Common myeloid progenitor, CD34-positive (primary cell): ENCODE measurements at regions of chr2 and their contacts with region 1.

Region 1: DNA sequence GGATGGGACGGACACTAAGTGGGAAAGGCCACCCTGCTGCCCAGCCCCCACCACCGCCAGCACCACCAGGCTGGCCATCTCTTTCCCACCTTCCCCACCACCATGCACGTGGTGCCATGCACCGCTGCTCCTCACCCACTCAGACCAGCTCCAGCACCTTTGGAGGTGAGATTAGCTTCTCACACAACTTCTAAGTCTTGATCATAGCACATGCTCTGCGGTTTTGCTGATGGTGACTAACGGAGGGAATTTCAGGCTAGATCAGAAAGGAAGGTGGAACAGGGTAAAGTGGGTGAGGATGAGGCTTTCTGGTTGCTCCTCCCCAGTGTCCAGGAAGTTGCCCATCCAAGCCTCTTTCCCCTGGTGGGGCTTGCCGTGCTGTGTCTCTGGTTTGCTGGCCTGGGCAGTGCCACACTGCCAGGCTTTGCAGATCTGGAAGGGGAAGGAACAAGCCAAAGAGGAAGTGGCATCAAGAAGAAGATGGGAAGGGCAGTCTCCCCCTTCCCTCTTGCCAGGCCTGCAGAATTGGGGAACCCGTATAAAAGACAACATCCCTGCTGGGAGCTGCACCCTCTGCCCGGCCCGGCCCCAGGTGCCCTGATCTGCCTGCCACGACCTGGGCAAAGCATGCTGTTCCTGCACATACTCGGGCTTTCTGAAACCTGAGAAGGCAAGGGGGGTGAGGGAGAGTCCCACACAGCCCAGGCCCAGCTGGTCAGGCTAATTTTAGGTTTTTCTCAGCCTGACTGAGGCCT is 44.3 kb upstream of the CAB39 start:
- DNase-seq: peak in 2 of 3 donors; percentile 48 to 58
- H3K4me3 ChIP-seq: no peak overlapping the region
- H3K27ac ChIP-seq: no peak overlapping the region
- H3K4me1 ChIP-seq: peaks cover 14 to 65% (median 52%) of the 10 kb centered on the region in 4 experiments
- H3K27me3 ChIP-seq: peaks cover 0 to 4% (median 3%) of the 10 kb centered on the region in 5 experiments

Region 2: GRCh38 chr2:230614913-230615332 is 53.4 kb before region 1 on chr2:
- CTCF ChIA-PET with region 1: no interaction called
- POLR2A ChIA-PET with region 1: no interaction called
- DNase-seq: no peak
- H3K4me3 ChIP-seq: no peak overlapping the region
- H3K27ac ChIP-seq: no peak overlapping the region
- H3K4me1 ChIP-seq: peaks cover 0 to 4% (median 1%) of the 10 kb centered on the region in 4 experiments
- H3K27me3 ChIP-seq: no peaks in the 10 kb centered on the region

Region 3: DNA sequence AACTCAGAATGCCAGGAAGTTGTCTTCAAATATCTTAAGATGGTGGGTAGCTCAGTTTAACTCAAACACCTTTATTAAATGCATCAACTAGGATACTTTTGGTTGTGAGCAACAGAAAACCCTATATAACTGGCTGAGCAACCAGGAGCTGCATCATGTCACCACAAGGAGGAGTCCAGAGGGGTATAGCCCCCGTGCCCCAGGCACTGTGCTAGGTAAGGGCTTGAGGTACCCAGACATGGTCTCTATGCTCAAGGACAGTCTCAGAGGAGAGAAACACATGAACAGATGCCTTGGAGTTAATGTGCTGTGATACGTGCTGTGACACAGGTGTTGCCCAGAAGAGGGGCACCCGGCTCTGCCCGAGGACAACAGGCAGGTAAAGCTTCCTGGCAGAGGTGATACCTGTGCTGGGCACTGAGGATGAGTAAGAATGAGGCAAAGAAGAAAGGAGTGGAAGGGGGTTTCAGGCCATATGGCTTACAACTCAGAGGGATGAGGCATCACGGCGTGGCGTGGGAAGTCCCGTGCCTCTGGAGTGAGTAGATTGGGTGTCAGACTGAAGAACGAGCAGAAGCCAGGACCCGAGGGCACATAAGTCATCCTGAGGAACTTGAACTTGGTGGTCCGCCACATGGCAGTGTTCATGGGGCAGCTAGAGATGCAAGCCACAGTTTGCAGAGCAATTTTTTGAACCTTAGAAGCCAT is 12.3 kb after region 1 on chr2:
- CTCF ChIA-PET with region 1: interaction called, 17 read pairs
- POLR2A ChIA-PET with region 1: no interaction called
- DNase-seq: no peak
- H3K4me3 ChIP-seq: no peak overlapping the region
- H3K27ac ChIP-seq: no peak overlapping the region
- H3K4me1 ChIP-seq: peaks cover 0 to 12% (median 0%) of the 10 kb centered on the region in 4 experiments
- H3K27me3 ChIP-seq: peaks cover 0 to 2% (median 0%) of the 10 kb centered on the region in 5 experiments

Region 4: DNA sequence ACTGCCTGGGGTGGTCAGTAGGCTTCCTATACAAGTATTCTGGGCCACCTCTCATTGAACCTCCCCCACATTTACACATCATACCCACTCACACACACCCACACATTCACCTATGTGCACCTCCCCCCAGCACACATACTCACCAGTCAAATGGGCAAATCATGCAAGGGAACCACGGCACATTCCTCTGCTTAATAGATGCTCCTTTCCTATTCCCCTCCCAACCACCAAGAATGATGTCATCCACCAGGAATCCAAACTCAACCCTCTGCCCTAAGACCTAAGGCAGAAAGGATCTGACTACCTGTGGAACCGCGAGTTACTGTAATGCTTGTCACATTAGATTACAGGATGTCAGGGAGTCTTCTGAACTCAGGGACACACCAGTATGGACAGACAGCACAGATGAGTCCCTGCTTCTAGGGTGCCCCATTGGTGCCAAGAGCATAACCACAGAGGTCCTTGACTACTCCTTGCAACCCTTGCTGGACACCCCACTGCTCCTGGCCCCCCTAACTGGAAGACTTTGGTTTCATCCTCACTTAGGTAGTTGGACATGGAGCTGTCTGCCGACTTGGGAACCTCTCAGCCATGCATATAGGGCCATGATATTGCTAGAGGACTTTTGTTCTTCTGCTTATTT is 22.8 kb after region 1 on chr2:
- CTCF ChIA-PET with region 1: no interaction called
- POLR2A ChIA-PET with region 1: no interaction called
- DNase-seq: no peak
- H3K4me3 ChIP-seq: no peak overlapping the region
- H3K27ac ChIP-seq: no peak overlapping the region
- H3K4me1 ChIP-seq: no peaks in the 10 kb centered on the region
- H3K27me3 ChIP-seq: no peaks in the 10 kb centered on the region